PC-9 (cell line): ENCODE measurements at regions of chr7 and their contacts with region 1.

Region 1: GRCh38 chr7:945556-946255 is 8.8 kb downstream of the ADAP1 start:
- DNase-seq: peak; percentile 99 to 100
- H3K4me3 ChIP-seq: peak overlapping the region; percentile 48; the same call in 1 of the 2 replicates
- H3K27ac ChIP-seq: peak overlapping the region; percentile 94
- H3K4me1 ChIP-seq: peaks cover 61% of the 10 kb centered on the region
- H3K27me3 ChIP-seq: no peaks in the 10 kb centered on the region
- CTCF ChIP-seq: no peak

Region 2: GRCh38 chr7:913736-914516 is 31.8 kb before region 1 on chr7:
- CTCF ChIA-PET with region 1: no interaction called
- POLR2A ChIA-PET with region 1: no interaction called
- intact Hi-C with region 1: loop called (anchors 1 kb)
- DNase-seq: peak; percentile 65 to 98
- H3K4me3 ChIP-seq: no peak overlapping the region
- H3K27ac ChIP-seq: no peak overlapping the region
- H3K4me1 ChIP-seq: peaks cover 12% of the 10 kb centered on the region
- H3K27me3 ChIP-seq: no peaks in the 10 kb centered on the region
- CTCF ChIP-seq: no peak; the same call in 1 of the 2 replicates

Region 3: GRCh38 chr7:923108-924041 is 22.3 kb before region 1 on chr7:
- CTCF ChIA-PET with region 1: no interaction called
- POLR2A ChIA-PET with region 1: interaction called, 28 read pairs
- intact Hi-C with region 1: loop called (anchors 1 kb)
- DNase-seq: peak in 1 of 2 experiments; percentile 84
- H3K4me3 ChIP-seq: no peak overlapping the region
- H3K27ac ChIP-seq: no peak overlapping the region
- H3K4me1 ChIP-seq: no peaks in the 10 kb centered on the region
- H3K27me3 ChIP-seq: no peaks in the 10 kb centered on the region
- CTCF ChIP-seq: no peak

Region 4: GRCh38 chr7:974820-975681 is 29.3 kb after region 1 on chr7 and contains the start of gene COX19:
- CTCF ChIA-PET with region 1: interaction called, 5 read pairs
- POLR2A ChIA-PET with region 1: interaction called, 14 read pairs
- intact Hi-C with region 1: no loop called
- DNase-seq: peak; percentile 70 to 93
- H3K4me3 ChIP-seq: peak within 1 kb of the TSS; percentile 84
- H3K27ac ChIP-seq: peak within 1 kb of the TSS; percentile 79
- H3K4me1 ChIP-seq: peaks cover 18% of the 10 kb centered on the region; the same call in 1 of the 2 replicates
- H3K27me3 ChIP-seq: no peaks in the 10 kb centered on the region
- CTCF ChIP-seq: no peak
- total RNA-seq, gene COX19: 28.9 and 29.3 TPM in 2 replicates

Region 5: GRCh38 chr7:1247527-1248059 is 301.9 kb after region 1 on chr7:
- CTCF ChIA-PET with region 1: no interaction called
- POLR2A ChIA-PET with region 1: no interaction called
- intact Hi-C with region 1: no loop called
- DNase-seq: no peak
- H3K4me3 ChIP-seq: no peak overlapping the region
- H3K27ac ChIP-seq: no peak overlapping the region
- H3K4me1 ChIP-seq: 0 out of 2 replicates have a peak, but pooled peaks cover 7% of the 10 kb centered on the region
- H3K27me3 ChIP-seq: peaks cover 80% of the 10 kb centered on the region
- CTCF ChIP-seq: no peak

Region 6: DNA sequence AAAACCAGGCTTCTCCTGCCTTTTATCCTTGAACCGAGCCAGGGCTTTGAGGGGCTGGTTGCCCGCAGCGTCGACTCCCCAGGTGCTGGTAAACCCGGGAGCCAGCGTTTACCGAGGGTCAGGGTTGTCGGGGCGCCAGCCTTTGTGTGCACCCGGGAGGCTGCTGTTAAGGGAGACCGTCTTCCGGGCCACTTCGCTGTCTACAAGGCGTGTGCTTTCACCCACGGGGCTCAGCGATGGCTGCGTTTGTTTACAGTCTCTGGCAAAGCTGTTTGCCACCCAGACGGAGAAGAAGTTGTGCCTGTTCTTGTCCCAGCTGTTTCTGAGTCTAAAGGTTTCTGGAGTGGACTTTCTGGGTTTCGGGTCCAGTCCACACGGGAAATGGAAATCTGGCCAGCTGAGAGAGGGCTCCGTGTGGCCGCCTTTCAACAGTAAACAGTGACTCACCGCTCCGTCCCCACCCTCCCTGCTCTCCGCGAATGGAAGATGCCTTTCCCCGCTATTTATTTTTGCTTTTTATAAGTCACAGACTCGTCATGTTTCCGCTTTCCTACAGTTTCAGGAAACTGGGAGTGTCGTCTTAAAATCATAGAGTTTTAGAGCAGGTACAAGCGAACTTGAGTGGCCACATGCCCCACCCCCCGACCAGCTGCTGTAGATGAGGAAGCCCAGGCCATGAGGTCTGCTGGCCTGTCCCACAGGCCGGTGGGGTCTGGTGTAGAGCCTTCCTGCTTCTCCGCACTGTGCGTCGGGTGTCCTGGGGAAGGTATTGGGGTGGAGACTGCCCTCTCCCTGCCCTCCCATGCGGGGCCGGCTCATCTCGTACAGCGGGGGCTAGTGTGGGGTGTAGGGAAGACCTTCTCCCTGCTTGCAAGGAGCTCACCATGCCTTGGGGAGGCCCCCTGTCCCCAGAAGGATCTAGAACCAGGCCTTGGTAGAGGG is 587.0 kb after region 1 on chr7:
- CTCF ChIA-PET with region 1: no interaction called
- POLR2A ChIA-PET with region 1: interaction called, 16 read pairs
- intact Hi-C with region 1: no loop called
- DNase-seq: peak; percentile 88 to 97
- H3K4me3 ChIP-seq: peak overlapping the region; percentile 64
- H3K27ac ChIP-seq: peak overlapping the region; percentile 89
- H3K4me1 ChIP-seq: peaks cover 52% of the 10 kb centered on the region
- H3K27me3 ChIP-seq: no peaks in the 10 kb centered on the region
- CTCF ChIP-seq: no peak